ENCODE measurements at regions of chr6 and their contacts with region 1.

Region 1: GRCh38 chr6:38022688-38023087 is 203.2 kb downstream of the ZFAND3 start:
- DNase-seq: no peak
- H3K4me3 Mint-ChIP-seq: no peak overlapping the region
- H3K27ac Mint-ChIP-seq: no peak overlapping the region
- H3K4me1 Mint-ChIP-seq: no peaks in the 10 kb centered on the region
- H3K27me3 Mint-ChIP-seq: no peaks in the 10 kb centered on the region
- CTCF ChIP-seq: no peak

Region 2: GRCh38 chr6:38034274-38034914 is 11.7 kb after region 1 on chr6:
- CTCF ChIA-PET with region 1: interaction called, 10 read pairs
- POLR2A ChIA-PET with region 1: interaction called, 8 read pairs
- intact Hi-C with region 1: no loop called
- DNase-seq: peak; percentile 40
- H3K4me3 Mint-ChIP-seq: no peak overlapping the region
- H3K27ac Mint-ChIP-seq: no peak overlapping the region
- H3K4me1 Mint-ChIP-seq: peaks cover 12% of the 10 kb centered on the region
- H3K27me3 Mint-ChIP-seq: no peaks in the 10 kb centered on the region
- CTCF ChIP-seq: peak; percentile 39

Region 3: DNA sequence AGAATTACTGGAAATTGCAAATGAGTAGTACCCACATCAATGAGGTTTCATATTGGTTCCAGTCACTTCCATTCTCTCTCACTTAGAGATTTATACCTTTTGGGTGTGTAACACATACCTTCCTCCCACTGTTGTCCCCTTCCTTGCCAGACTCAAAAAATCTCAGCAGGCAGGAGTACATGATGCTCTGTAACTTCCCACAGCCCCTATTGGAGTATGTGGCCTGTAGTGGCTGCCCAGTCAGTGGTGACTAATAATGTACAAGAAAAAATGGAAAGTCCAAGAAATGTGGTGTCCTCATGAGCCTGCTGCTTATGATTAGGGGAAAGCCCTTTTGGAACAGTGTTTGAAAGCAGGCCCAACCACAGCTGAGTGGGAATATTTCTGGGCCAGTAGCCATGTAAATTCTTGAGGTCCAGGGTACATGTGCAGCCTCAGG is 108.9 kb after region 1 on chr6:
- CTCF ChIA-PET with region 1: no interaction called
- POLR2A ChIA-PET with region 1: no interaction called
- intact Hi-C with region 1: no loop called
- DNase-seq: peak; percentile 77
- H3K4me3 Mint-ChIP-seq: no peak overlapping the region
- H3K27ac Mint-ChIP-seq: peak overlapping the region; percentile 37
- H3K4me1 Mint-ChIP-seq: peaks cover 15% of the 10 kb centered on the region
- H3K27me3 Mint-ChIP-seq: no peaks in the 10 kb centered on the region
- CTCF ChIP-seq: no peak